ENCODE measurements at regions of chr5 and their contacts with region 1.

Region 1: GRCh38 chr5:90854169-90854568 is 295.6 kb downstream of the ADGRV1 start:
- DNase-seq: no peak
- ATAC-seq: peak; percentile 28 to 41 (median 38)
- H3K4me3 ChIP-seq: no peak overlapping the region
- H3K27ac ChIP-seq: no peak overlapping the region
- H3K4me1 ChIP-seq: no peaks in the 10 kb centered on the region
- H3K27me3 ChIP-seq: no peaks in the 10 kb centered on the region
- CTCF ChIP-seq: no peak
- POLR2A ChIP-seq: no peak

Region 2: GRCh38 chr5:90353254-90353653 is 500.9 kb before region 1 on chr5:
- intact Hi-C with region 1: no loop called
- DNase-seq: no peak
- ATAC-seq: no peak
- H3K4me3 ChIP-seq: no peak overlapping the region
- H3K27ac ChIP-seq: no peak overlapping the region
- H3K4me1 ChIP-seq: no peaks in the 10 kb centered on the region
- H3K27me3 ChIP-seq: no peaks in the 10 kb centered on the region
- CTCF ChIP-seq: no peak
- POLR2A ChIP-seq: no peak

Region 3: GRCh38 chr5:90949469-90950358 is 95.5 kb after region 1 on chr5:
- intact Hi-C with region 1: no loop called
- DNase-seq: no peak
- ATAC-seq: peak; percentile 25 to 91 (median 58)
- H3K4me3 ChIP-seq: no peak overlapping the region
- H3K27ac ChIP-seq: no peak overlapping the region
- H3K4me1 ChIP-seq: peaks cover 0 to 7% (median 0%) of the 10 kb centered on the region in 4 donors
- H3K27me3 ChIP-seq: no peaks in the 10 kb centered on the region
- CTCF ChIP-seq: no peak
- POLR2A ChIP-seq: no peak

Region 4: GRCh38 chr5:91225848-91226686 is 371.9 kb after region 1 on chr5:
- intact Hi-C with region 1: loop called in 1 of 2 experiments (anchors 10 kb)
- DNase-seq: peak in 1 of 3 donors; percentile 47
- ATAC-seq: peak; percentile 62 to 91 (median 75)
- H3K4me3 ChIP-seq: no peak overlapping the region
- H3K27ac ChIP-seq: no peak overlapping the region
- H3K4me1 ChIP-seq: no peaks in the 10 kb centered on the region
- H3K27me3 ChIP-seq: no peaks in the 10 kb centered on the region
- CTCF ChIP-seq: peak; percentile 34 to 57 (median 50)
- POLR2A ChIP-seq: no peak

Region 5: GRCh38 chr5:91397791-91398190 is 543.6 kb after region 1 on chr5:
- intact Hi-C with region 1: loop called in 1 of 2 experiments (anchors 10 kb)
- DNase-seq: no peak
- ATAC-seq: no peak
- H3K4me3 ChIP-seq: no peak overlapping the region
- H3K27ac ChIP-seq: no peak overlapping the region
- H3K4me1 ChIP-seq: no peaks in the 10 kb centered on the region
- H3K27me3 ChIP-seq: no peaks in the 10 kb centered on the region
- CTCF ChIP-seq: no peak
- POLR2A ChIP-seq: no peak

Measured in right lobe of liver (tissue), 6 donors.